SK-N-SH (cell line): ENCODE measurements at regions of chr3 and their contacts with region 1.

Region 1: GRCh38 chr3:57221883-57222282 is 5.6 kb upstream of the APPL1 start:
- DNase-seq: peak; percentile 36
- H3K4me3 ChIP-seq: no peak overlapping the region
- H3K27ac ChIP-seq: no peak overlapping the region
- H3K4me1 ChIP-seq: peaks cover 0 to 3% of the 10 kb centered on the region in 2 experiments; a peak in 2 of 4 replicates
- H3K27me3 ChIP-seq: no peaks in the 10 kb centered on the region
- CTCF ChIP-seq: peak; percentile 53
- EP300 ChIP-seq: no peak
- RAD21 ChIP-seq: peak; percentile 80

Region 2: DNA sequence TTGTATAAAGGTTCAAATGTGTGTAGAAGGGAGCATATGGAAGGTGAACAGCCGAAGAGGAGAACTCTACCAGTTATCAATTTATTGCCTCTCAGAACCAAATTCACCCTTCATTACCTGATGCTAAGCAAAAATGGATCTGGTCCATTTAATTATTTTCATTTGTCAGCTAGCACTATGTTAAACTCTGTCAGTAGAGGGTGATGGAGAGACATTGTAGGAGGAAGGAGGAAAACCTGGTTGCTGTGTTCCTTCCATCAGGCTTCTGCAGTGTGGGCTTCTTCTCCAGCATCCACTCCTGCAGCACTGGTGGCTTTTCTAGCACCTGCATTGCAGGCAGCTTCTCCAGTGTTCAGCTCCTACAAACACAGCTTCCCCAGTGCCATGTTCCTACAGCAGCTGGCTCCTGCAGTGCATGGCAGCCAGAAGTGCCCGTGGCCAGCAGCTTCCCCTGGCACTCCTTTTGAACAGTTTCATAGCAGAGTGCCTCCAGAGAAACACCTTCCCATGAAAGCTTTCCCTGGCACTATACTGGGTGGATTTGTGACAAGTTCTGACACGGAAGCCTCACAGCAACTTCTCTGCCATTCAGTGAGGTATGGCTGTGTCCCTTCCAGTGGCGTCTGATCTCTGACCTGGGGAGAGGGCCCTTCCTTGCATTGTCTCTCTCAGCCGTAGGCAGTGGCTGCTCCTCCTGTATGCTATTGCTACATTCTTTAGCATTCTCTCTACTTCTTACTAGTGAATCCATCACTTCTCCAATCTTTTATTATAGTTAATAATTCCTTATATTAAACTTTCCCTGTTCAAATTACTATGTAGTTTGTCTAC is 42.1 kb before region 1 on chr3:
- CTCF ChIA-PET with region 1: interaction called, 11 read pairs
- POLR2A ChIA-PET with region 1: no interaction called
- DNase-seq: peak; percentile 47
- H3K4me3 ChIP-seq: no peak overlapping the region
- H3K27ac ChIP-seq: no peak overlapping the region
- H3K4me1 ChIP-seq: peaks cover 0 to 7% of the 10 kb centered on the region in 2 experiments; a peak in 2 of 4 replicates
- H3K27me3 ChIP-seq: no peaks in the 10 kb centered on the region
- CTCF ChIP-seq: peak; percentile 50
- EP300 ChIP-seq: no peak
- RAD21 ChIP-seq: peak; percentile 72

Region 3: DNA sequence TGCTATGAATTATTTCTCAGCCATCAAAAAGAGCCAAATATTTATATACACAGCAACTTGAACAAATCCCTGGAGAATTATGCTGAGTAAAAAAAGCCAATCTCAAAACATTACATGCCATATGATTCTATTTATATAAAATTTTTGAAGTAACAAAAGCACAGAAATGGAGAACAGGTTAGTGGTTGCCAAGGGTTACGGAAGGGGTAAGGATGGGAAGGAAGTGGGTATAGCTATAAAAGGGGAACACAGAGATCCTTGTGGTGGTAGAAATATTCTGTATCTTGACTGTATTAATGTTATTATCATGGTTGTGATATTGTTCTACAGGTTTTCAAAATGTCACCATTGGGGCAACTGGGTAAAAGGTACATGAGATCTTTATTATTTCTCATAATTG is 132.9 kb after region 1 on chr3:
- CTCF ChIA-PET with region 1: no interaction called
- POLR2A ChIA-PET with region 1: no interaction called
- DNase-seq: no peak
- H3K4me3 ChIP-seq: no peak overlapping the region
- H3K27ac ChIP-seq: no peak overlapping the region
- H3K4me1 ChIP-seq: no peaks in the 10 kb centered on the region
- H3K27me3 ChIP-seq: no peaks in the 10 kb centered on the region
- CTCF ChIP-seq: no peak
- EP300 ChIP-seq: no peak
- RAD21 ChIP-seq: no peak